ENCODE measurements at regions of chr3 and their contacts with region 1.

Region 1: GRCh38 chr3:167350245-167350862 is 29.7 kb downstream of the ZBBX start:
- DNase-seq: peak; percentile 26
- ATAC-seq: no peak; the same call in 1 of the 2 replicates
- H3K4me3 ChIP-seq: no peak overlapping the region
- H3K27ac ChIP-seq: no peak overlapping the region
- H3K4me1 ChIP-seq: no peaks in the 10 kb centered on the region
- H3K27me3 ChIP-seq: no peaks in the 10 kb centered on the region
- CTCF ChIP-seq: peak; percentile 55 to 58 (median 58); a peak in 5 of 6 replicates
- POLR2A ChIP-seq: no peak
- RAD21 ChIP-seq: peak; percentile 79

Region 2: DNA sequence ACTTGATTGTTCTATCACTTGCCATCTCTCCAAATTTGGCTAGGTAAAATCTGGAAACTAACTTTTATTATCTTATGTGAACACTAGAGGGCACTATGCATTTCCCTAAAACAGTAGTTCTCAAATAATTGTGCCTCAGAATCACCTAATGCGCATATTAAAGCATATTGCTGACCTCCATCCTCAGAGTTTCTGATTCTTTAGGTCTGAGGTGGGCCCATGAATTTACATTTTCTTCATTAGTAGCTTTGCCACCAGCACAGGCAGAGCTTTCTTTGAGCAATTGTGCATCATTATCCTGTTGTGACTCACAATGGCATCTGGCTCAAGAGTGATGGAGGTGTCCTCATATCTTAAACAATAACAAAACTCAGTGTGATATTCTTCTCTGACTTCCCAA is 1495.7 kb before region 1 on chr3:
- CTCF ChIA-PET with region 1: no interaction called
- POLR2A ChIA-PET with region 1: no interaction called
- RAD21 ChIA-PET with region 1: no interaction called
- intact Hi-C with region 1: loop called (anchors 10 kb)
- DNase-seq: no peak
- ATAC-seq: no peak
- H3K4me3 ChIP-seq: no peak overlapping the region
- H3K27ac ChIP-seq: no peak overlapping the region
- H3K4me1 ChIP-seq: no peaks in the 10 kb centered on the region
- H3K27me3 ChIP-seq: no peaks in the 10 kb centered on the region
- CTCF ChIP-seq: peak; percentile 29 to 73 (median 33); a peak in 5 of 6 replicates
- POLR2A ChIP-seq: no peak
- RAD21 ChIP-seq: peak; percentile 55

Region 3: GRCh38 chr3:166013073-166013679 is 1337.2 kb before region 1 on chr3:
- CTCF ChIA-PET with region 1: no interaction called
- POLR2A ChIA-PET with region 1: no interaction called
- RAD21 ChIA-PET with region 1: no interaction called
- intact Hi-C with region 1: loop called (anchors 2 kb)
- DNase-seq: peak; percentile 23
- ATAC-seq: no peak
- H3K4me3 ChIP-seq: no peak overlapping the region
- H3K27ac ChIP-seq: no peak overlapping the region
- H3K4me1 ChIP-seq: no peaks in the 10 kb centered on the region
- H3K27me3 ChIP-seq: no peaks in the 10 kb centered on the region
- CTCF ChIP-seq: peak; percentile 39 to 64 (median 40); a peak in 5 of 6 replicates
- POLR2A ChIP-seq: no peak
- RAD21 ChIP-seq: peak; percentile 66

Region 4: GRCh38 chr3:166837535-166837934 is 512.8 kb before region 1 on chr3:
- CTCF ChIA-PET with region 1: no interaction called
- POLR2A ChIA-PET with region 1: no interaction called
- RAD21 ChIA-PET with region 1: no interaction called
- intact Hi-C with region 1: loop called (anchors 5 kb)
- DNase-seq: peak; percentile 37
- ATAC-seq: peak; percentile 94
- H3K4me3 ChIP-seq: no peak overlapping the region
- H3K27ac ChIP-seq: no peak overlapping the region
- H3K4me1 ChIP-seq: no peaks in the 10 kb centered on the region
- H3K27me3 ChIP-seq: no peaks in the 10 kb centered on the region
- CTCF ChIP-seq: peak in 2 of 3 experiments; percentile 58 to 75; a peak in 4 of 6 replicates
- POLR2A ChIP-seq: no peak
- RAD21 ChIP-seq: peak; percentile 40